Activated CD8-positive, alpha-beta T cell treated with anti-CD3 and anti-CD28 coated beads, Interleukin-2, amount 10 ng/mL, durations not matched to agents 7 days and 5 days (primary cell): ENCODE measurements at regions of chr1 and their contacts with region 1.

Region 1: DNA sequence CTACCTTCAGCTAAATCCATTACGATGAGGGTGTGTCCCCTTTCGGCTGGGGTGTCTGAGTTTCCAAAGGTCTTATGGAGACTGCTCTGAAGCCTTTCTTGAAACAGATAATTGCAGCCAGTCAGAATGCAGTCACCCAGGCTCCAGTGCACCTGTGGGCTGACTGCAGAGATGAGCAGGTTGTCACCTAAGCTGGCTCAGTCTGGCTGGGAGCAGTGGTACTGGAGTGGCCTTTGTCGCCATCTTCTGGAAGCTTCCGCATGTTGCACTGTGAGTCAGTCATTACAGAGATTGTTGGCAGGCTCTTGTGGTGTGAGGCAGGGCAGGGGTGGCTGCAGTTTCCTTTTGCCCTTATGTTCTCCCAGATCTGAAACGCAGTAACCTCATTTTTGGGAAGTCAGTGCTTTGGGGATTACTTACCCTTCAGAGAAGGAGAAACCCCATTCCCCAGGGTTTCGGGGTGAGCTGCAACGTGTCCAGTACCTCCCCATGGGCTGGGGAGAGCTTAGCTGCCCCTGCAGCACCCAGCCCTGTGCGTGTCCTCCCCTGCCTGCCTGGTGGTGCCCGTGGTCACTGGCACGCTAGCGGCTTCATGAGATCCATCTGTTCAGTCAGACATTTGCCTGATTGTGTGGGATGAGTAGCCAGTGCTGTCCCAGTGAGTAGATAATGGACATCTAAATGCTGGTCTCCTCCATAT is 48.0 kb downstream of the SMYD2 start:
- DNase-seq: peak; percentile 86
- ATAC-seq: peak; percentile 94
- H3K4me3 Mint-ChIP-seq: no peak overlapping the region
- H3K27ac Mint-ChIP-seq: no peak overlapping the region
- H3K4me1 Mint-ChIP-seq: peaks cover 12% of the 10 kb centered on the region
- H3K27me3 Mint-ChIP-seq: no peaks in the 10 kb centered on the region

Region 2: DNA sequence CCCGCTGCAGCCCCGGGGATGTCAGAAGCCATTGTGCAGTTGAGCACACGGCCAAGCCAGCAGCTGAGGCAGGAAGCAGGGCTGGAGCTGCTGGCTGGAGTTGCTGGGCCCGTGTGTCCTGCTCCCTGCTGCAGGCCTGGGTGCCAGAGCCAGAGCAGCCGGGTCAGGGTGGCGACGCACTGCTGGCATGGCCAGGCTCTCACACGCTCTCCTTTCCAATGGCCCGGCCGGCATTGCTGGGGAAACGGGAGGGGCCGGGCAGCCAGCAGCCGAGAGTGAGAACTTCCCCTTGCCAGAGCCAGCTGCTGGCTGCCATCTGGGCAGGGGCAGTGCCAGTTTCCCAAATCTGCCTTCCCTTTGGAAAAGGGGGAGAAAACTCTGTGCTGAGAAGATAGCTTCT is 423.6 kb before region 1 on chr1:
- CTCF ChIA-PET with region 1: no interaction called
- POLR2A ChIA-PET with region 1: no interaction called
- DNase-seq: no peak
- ATAC-seq: no peak
- H3K4me3 Mint-ChIP-seq: no peak overlapping the region
- H3K27ac Mint-ChIP-seq: no peak overlapping the region
- H3K4me1 Mint-ChIP-seq: no peaks in the 10 kb centered on the region
- H3K27me3 Mint-ChIP-seq: no peaks in the 10 kb centered on the region

Region 3: DNA sequence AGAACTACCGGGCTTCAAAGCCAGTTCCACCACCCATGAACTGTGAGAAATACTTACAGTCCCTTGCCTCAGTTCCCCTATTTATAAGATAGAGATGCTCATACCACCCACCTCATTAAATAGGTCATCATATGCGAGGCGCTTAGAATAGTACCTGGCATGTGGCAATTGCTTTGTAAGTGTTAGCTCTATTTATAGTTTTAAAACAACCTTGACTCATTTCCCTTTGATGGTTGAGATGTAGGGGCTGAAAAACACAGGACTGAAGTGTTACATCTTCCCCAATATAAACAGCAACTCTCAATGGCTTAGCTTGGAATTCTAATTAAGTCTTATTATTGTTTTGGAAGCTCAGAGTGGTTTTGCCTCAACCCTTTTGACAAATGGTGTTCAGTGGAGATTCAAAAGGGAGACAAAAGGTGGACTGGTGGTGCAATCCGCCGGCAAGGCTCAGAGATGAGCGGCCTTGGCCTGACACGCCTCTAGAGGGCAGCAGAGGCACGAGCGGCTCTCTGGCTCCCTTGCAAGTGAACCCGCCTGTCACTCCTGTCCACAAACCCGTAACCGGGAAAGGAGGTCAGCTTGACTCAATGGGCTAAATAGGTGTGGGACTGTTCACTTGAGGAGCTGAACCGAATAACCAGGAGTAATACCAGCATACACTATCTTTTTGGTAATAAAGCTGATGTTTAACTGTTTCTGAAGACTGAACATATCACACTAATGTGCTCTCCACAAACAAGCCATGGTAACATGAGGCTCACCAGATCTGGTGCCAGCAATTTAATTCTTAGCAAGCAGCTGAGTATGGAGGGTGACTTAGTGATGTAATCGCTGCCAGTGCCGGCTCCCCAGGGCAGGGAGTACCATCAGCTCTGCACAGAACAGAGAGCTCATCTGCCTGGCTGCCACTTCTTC is 67.5 kb before region 1 on chr1:
- CTCF ChIA-PET with region 1: interaction called, 486 read pairs
- POLR2A ChIA-PET with region 1: interaction called, 4 read pairs
- DNase-seq: peak; percentile 88
- ATAC-seq: peak; percentile 96
- H3K4me3 Mint-ChIP-seq: no peak overlapping the region
- H3K27ac Mint-ChIP-seq: no peak overlapping the region
- H3K4me1 Mint-ChIP-seq: peaks cover 20% of the 10 kb centered on the region
- H3K27me3 Mint-ChIP-seq: peaks cover 49% of the 10 kb centered on the region

Region 4: GRCh38 chr1:214310777-214311690 is 17.9 kb before region 1 on chr1:
- CTCF ChIA-PET with region 1: interaction called, 37 read pairs
- POLR2A ChIA-PET with region 1: no interaction called
- DNase-seq: no peak
- ATAC-seq: peak; percentile 73
- H3K4me3 Mint-ChIP-seq: peak overlapping the region; percentile 69
- H3K27ac Mint-ChIP-seq: peak overlapping the region; percentile 66
- H3K4me1 Mint-ChIP-seq: peaks cover 18% of the 10 kb centered on the region
- H3K27me3 Mint-ChIP-seq: no peaks in the 10 kb centered on the region

Region 5: GRCh38 chr1:214386747-214387146 is 57.8 kb after region 1 on chr1:
- CTCF ChIA-PET with region 1: interaction called, 11 read pairs
- POLR2A ChIA-PET with region 1: no interaction called
- DNase-seq: no peak
- ATAC-seq: no peak
- H3K4me3 Mint-ChIP-seq: no peak overlapping the region
- H3K27ac Mint-ChIP-seq: no peak overlapping the region
- H3K4me1 Mint-ChIP-seq: peaks cover 4% of the 10 kb centered on the region
- H3K27me3 Mint-ChIP-seq: no peaks in the 10 kb centered on the region

Region 6: DNA sequence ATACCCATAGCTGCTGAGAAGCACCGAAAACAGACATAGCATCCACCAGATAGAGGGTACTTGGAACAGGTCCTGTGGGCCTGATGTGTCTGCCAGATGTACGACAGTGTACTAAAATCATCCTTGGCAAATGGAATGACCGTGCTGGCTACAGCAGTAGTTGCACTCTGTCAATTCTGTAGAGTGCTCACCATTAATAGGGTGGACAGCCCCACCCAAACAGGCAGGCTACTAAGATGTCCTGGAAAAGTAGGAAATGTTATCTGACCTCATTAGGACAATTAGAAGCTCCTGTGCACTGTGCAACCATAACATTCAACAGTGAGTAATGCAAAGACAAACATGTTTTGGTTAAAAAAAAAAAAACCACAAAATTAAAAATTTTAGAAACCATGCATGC is 116.3 kb after region 1 on chr1:
- CTCF ChIA-PET with region 1: interaction called, 14 read pairs
- POLR2A ChIA-PET with region 1: no interaction called
- DNase-seq: no peak
- ATAC-seq: no peak
- H3K4me3 Mint-ChIP-seq: no peak overlapping the region
- H3K27ac Mint-ChIP-seq: no peak overlapping the region
- H3K4me1 Mint-ChIP-seq: peaks cover 39% of the 10 kb centered on the region
- H3K27me3 Mint-ChIP-seq: peaks cover 9% of the 10 kb centered on the region

Region 7: GRCh38 chr1:214602764-214603657 is 274.1 kb after region 1 on chr1 and contains the start of gene CENPF:
- CTCF ChIA-PET with region 1: interaction called, 13 read pairs
- POLR2A ChIA-PET with region 1: no interaction called
- DNase-seq: peak; percentile 97
- ATAC-seq: peak; percentile 98
- H3K4me3 Mint-ChIP-seq: peak within 1 kb of the TSS; percentile 92
- H3K27ac Mint-ChIP-seq: peak within 1 kb of the TSS; percentile 96
- H3K4me1 Mint-ChIP-seq: peaks cover 25% of the 10 kb centered on the region
- H3K27me3 Mint-ChIP-seq: no peaks in the 10 kb centered on the region
- total RNA-seq, gene CENPF: 176 to 180 TPM